CD4-positive, alpha-beta memory T cell (primary cell): ENCODE measurements at regions of chr22 and their contacts with region 1.

Region 1: GRCh38 chr22:44684506-44685383 is 17.3 kb upstream of the PRR5 start:
- DNase-seq: peak; percentile 83 to 88 (median 83)
- H3K4me3 ChIP-seq: peak overlapping the region in 1 of 2 donors; percentile 29
- H3K4me3 Mint-ChIP-seq: peak overlapping the region; percentile 4 to 82 (median 67)
- H3K27ac ChIP-seq: peak overlapping the region; percentile 19
- H3K27ac Mint-ChIP-seq: peak overlapping the region; percentile 66 to 97 (median 91)
- H3K4me1 ChIP-seq: peaks cover 56% of the 10 kb centered on the region
- H3K4me1 Mint-ChIP-seq: peaks cover 18 to 59% (median 38%) of the 10 kb centered on the region in 4 donors
- H3K27me3 ChIP-seq: no peaks in the 10 kb centered on the region
- H3K27me3 Mint-ChIP-seq: no peaks in the 10 kb centered on the region

Region 2: DNA sequence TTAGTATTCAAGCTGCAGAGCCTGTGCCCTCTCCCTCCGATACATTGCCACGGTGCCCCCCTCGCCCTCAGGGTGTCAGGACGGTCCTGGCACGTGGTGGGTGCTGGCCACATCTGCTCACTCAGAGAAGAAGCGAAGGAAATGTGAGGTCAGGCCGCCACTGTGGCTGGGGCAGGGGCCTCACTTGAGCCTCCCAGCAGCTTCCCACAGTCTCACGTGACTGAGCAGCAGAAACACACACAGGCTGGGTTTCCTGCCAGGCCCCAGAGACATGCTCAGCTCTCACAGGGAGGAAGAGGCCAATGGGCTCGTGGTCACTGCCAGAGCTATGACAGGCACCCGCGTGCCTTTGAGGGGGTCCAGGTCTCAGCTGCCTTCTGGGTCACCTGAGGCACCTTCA is 20.6 kb before region 1 on chr22:
- CTCF ChIA-PET with region 1: interaction called, 51 read pairs
- POLR2A ChIA-PET with region 1: interaction called, 18 read pairs
- intact Hi-C with region 1: loop called (anchors 1 kb)
- DNase-seq: peak; percentile 41 to 57 (median 45)
- H3K4me3 ChIP-seq: no peak overlapping the region
- H3K4me3 Mint-ChIP-seq: peak overlapping the region; percentile 48 to 81 (median 69)
- H3K27ac ChIP-seq: peak overlapping the region; percentile 14
- H3K27ac Mint-ChIP-seq: peak overlapping the region; percentile 65 to 92 (median 85)
- H3K4me1 ChIP-seq: peaks cover 51% of the 10 kb centered on the region
- H3K4me1 Mint-ChIP-seq: peaks cover 28 to 56% (median 45%) of the 10 kb centered on the region in 4 donors
- H3K27me3 ChIP-seq: no peaks in the 10 kb centered on the region
- H3K27me3 Mint-ChIP-seq: no peaks in the 10 kb centered on the region

Region 3: GRCh38 chr22:44669561-44669976 is 15.2 kb before region 1 on chr22:
- CTCF ChIA-PET with region 1: interaction called, 51 read pairs
- POLR2A ChIA-PET with region 1: interaction called, 18 read pairs
- intact Hi-C with region 1: loop called (anchors 1 kb)
- DNase-seq: no peak
- H3K4me3 ChIP-seq: peak overlapping the region; percentile 42 to 49
- H3K4me3 Mint-ChIP-seq: peak overlapping the region; percentile 61 to 78 (median 72)
- H3K27ac ChIP-seq: peak overlapping the region; percentile 49
- H3K27ac Mint-ChIP-seq: peak overlapping the region in 6 of 7 donors; percentile 15 to 72 (median 45)
- H3K4me1 ChIP-seq: peaks cover 58% of the 10 kb centered on the region
- H3K4me1 Mint-ChIP-seq: peaks cover 24 to 67% (median 48%) of the 10 kb centered on the region in 4 donors
- H3K27me3 ChIP-seq: no peaks in the 10 kb centered on the region
- H3K27me3 Mint-ChIP-seq: no peaks in the 10 kb centered on the region

Region 4: GRCh38 chr22:44701824-44702478 is 17.2 kb after region 1 on chr22 and contains the start of gene PRR5:
- CTCF ChIA-PET with region 1: interaction called, 38 read pairs
- POLR2A ChIA-PET with region 1: interaction called, 5 read pairs
- intact Hi-C with region 1: loop called (anchors 1 kb)
- DNase-seq: peak; percentile 83 to 89 (median 86)
- H3K4me3 ChIP-seq: peak within 1 kb of the TSS in 1 of 2 donors; percentile 47
- H3K4me3 Mint-ChIP-seq: peak within 1 kb of the TSS; percentile 71 to 87 (median 78)
- H3K27ac ChIP-seq: peak within 1 kb of the TSS; percentile 42
- H3K27ac Mint-ChIP-seq: peak within 1 kb of the TSS; percentile 84 to 95 (median 91)
- H3K4me1 ChIP-seq: peaks cover 27% of the 10 kb centered on the region
- H3K4me1 Mint-ChIP-seq: peaks cover 6 to 40% (median 21%) of the 10 kb centered on the region in 4 donors
- H3K27me3 ChIP-seq: no peaks in the 10 kb centered on the region
- H3K27me3 Mint-ChIP-seq: no peaks in the 10 kb centered on the region
- total RNA-seq, gene PRR5: 45.9 to 46.5 TPM

Region 5: GRCh38 chr22:44735540-44736488 is 51.1 kb after region 1 on chr22:
- CTCF ChIA-PET with region 1: interaction called, 27 read pairs
- POLR2A ChIA-PET with region 1: no interaction called
- intact Hi-C with region 1: no loop called
- DNase-seq: peak; percentile 66 to 77 (median 69)
- H3K4me3 ChIP-seq: no peak overlapping the region
- H3K4me3 Mint-ChIP-seq: no peak overlapping the region
- H3K27ac ChIP-seq: no peak overlapping the region
- H3K27ac Mint-ChIP-seq: peak overlapping the region in 1 of 7 donors; percentile 35
- H3K4me1 ChIP-seq: no peaks in the 10 kb centered on the region
- H3K4me1 Mint-ChIP-seq: peaks cover 0 to 5% (median 2%) of the 10 kb centered on the region in 4 donors
- H3K27me3 ChIP-seq: no peaks in the 10 kb centered on the region
- H3K27me3 Mint-ChIP-seq: no peaks in the 10 kb centered on the region